ENCODE measurements at regions of chr15 and their contacts with region 1.

Region 1: GRCh38 chr15:90320061-90320884 is 31.8 kb upstream of the ZNF774 start:
- DNase-seq: peak; percentile 39 to 74 (median 65)
- ATAC-seq: peak; percentile 100
- H3K4me3 ChIP-seq: no peak overlapping the region
- H3K4me3 Mint-ChIP-seq: peak overlapping the region in 6 of 10 donors; percentile 8 to 52 (median 38)
- H3K27ac ChIP-seq: no peak overlapping the region
- H3K27ac Mint-ChIP-seq: peak overlapping the region in 2 of 9 donors; percentile 26 to 28
- H3K4me1 ChIP-seq: peaks cover 0 to 5% of the 10 kb centered on the region in 2 donors
- H3K4me1 Mint-ChIP-seq: peaks cover 3 to 10% (median 8%) of the 10 kb centered on the region in 7 donors
- H3K27me3 ChIP-seq: no peaks in the 10 kb centered on the region
- H3K27me3 Mint-ChIP-seq: peaks cover 0 to 2% (median 0%) of the 10 kb centered on the region in 5 donors

Region 2: DNA sequence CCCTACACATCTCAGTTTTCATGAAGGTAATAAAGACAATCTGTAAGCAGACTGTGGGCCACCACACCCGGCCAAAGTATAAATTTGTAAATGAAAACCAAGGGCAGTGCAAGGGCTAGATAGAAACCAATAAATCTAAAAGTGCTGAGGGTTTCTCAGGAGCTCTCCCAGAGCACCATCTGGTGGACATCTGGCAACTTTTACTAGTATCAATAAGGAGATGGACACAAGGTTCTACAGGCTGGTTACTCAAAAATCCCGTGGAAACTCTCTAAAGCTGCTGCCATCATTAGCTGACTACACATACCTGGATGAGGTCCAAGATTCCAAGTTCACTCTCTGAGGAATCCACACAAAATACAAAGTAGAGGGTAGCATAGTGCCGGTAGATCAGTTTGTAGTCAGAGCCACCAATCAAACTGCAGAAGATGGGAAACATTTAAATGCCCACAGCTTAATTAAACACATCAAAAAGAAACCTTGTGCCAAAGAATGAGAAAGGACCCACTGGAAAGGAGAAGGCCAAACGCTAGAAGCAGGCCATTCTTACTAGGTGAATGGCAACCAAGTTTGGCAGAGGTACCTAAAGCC is 432.0 kb before region 1 on chr15:
- CTCF ChIA-PET with region 1: no interaction called
- POLR2A ChIA-PET with region 1: no interaction called
- intact Hi-C with region 1: no loop called
- DNase-seq: no peak
- ATAC-seq: no peak
- H3K4me3 ChIP-seq: no peak overlapping the region
- H3K4me3 Mint-ChIP-seq: no peak overlapping the region
- H3K27ac ChIP-seq: no peak overlapping the region
- H3K27ac Mint-ChIP-seq: no peak overlapping the region
- H3K4me1 ChIP-seq: peaks cover 4 to 14% of the 10 kb centered on the region in 2 donors
- H3K4me1 Mint-ChIP-seq: peaks cover 15 to 34% (median 24%) of the 10 kb centered on the region in 7 donors
- H3K27me3 ChIP-seq: no peaks in the 10 kb centered on the region
- H3K27me3 Mint-ChIP-seq: no peaks in the 10 kb centered on the region

Region 3: GRCh38 chr15:90362936-90363212 is 42.6 kb after region 1 on chr15:
- CTCF ChIA-PET with region 1: interaction called, 28 read pairs
- POLR2A ChIA-PET with region 1: no interaction called
- intact Hi-C with region 1: loop called (anchors 1 to 5 kb)
- DNase-seq: no peak
- ATAC-seq: no peak
- H3K4me3 ChIP-seq: no peak overlapping the region
- H3K4me3 Mint-ChIP-seq: peak overlapping the region in 1 of 10 donors; percentile 44
- H3K27ac ChIP-seq: no peak overlapping the region
- H3K27ac Mint-ChIP-seq: no peak overlapping the region
- H3K4me1 ChIP-seq: peaks cover 6 to 13% of the 10 kb centered on the region in 2 donors
- H3K4me1 Mint-ChIP-seq: peaks cover 11 to 35% (median 34%) of the 10 kb centered on the region in 7 donors
- H3K27me3 ChIP-seq: no peaks in the 10 kb centered on the region
- H3K27me3 Mint-ChIP-seq: no peaks in the 10 kb centered on the region

Region 4: DNA sequence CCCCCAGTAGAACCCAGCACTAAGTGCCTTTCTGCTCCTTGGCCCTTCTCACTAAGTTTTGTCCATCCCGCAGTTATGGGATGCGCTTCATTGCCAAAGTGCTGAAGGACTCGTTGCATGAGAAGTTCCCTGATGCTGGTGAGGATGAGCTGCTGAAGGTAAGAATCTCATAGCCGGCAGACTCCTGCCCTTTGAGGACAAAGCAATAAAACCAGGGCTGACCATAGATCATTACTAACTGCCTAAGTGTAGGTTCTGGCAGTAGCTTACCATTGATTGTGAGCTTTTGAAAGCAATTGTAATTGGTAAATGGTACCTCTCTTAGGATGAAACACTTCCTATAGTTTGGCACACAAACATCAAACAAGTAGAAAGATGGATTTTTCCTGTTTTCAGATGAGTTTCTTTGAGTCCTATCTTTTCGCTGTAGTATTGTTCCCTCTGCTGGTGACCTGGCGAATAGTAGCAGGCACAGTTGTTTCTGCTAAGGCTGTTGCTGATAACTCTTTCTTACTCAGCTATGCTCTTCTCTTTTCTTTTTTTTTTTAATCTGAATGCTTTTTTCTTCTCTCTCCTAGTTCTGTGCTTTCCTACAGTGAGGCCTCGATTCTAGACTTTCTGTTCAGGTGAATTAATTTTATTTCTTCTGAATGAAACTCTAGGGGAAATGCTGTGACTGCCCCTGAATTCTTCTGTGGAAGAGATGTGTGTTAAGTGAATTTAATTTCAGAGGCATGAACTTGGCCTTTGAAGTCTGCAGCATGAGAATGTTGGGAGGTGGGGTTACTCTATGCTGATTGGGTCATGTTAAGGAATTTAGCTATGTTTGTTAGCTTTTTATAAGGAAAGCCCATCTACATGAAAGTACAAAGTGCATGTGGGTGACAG is 162.1 kb after region 1 on chr15:
- CTCF ChIA-PET with region 1: interaction called, 107 read pairs
- POLR2A ChIA-PET with region 1: interaction called, 10 read pairs
- intact Hi-C with region 1: loop called (anchors 1 kb)
- DNase-seq: peak in 7 of 9 donors; percentile 28 to 60 (median 47)
- ATAC-seq: peak; percentile 61
- H3K4me3 ChIP-seq: no peak overlapping the region
- H3K4me3 Mint-ChIP-seq: no peak overlapping the region
- H3K27ac ChIP-seq: no peak overlapping the region
- H3K27ac Mint-ChIP-seq: peak overlapping the region in 4 of 9 donors; percentile 9 to 50 (median 32)
- H3K4me1 ChIP-seq: peaks cover 10 to 11% of the 10 kb centered on the region in 2 donors
- H3K4me1 Mint-ChIP-seq: peaks cover 9 to 44% (median 40%) of the 10 kb centered on the region in 7 donors
- H3K27me3 ChIP-seq: no peaks in the 10 kb centered on the region
- H3K27me3 Mint-ChIP-seq: no peaks in the 10 kb centered on the region

Region 5: GRCh38 chr15:90603893-90604292 is 283.6 kb after region 1 on chr15:
- CTCF ChIA-PET with region 1: interaction called, 3 read pairs
- POLR2A ChIA-PET with region 1: no interaction called
- intact Hi-C with region 1: loop called in 1 of 2 experiments (anchors 5 kb)
- DNase-seq: peak in 4 of 9 donors; percentile 35 to 44 (median 38)
- ATAC-seq: peak; percentile 55
- H3K4me3 ChIP-seq: no peak overlapping the region
- H3K4me3 Mint-ChIP-seq: peak overlapping the region in 2 of 10 donors; percentile 0 to 7
- H3K27ac ChIP-seq: no peak overlapping the region
- H3K27ac Mint-ChIP-seq: peak overlapping the region in 8 of 9 donors; percentile 14 to 83 (median 70)
- H3K4me1 ChIP-seq: peaks cover 0 to 32% of the 10 kb centered on the region in 2 donors
- H3K4me1 Mint-ChIP-seq: peaks cover 37 to 76% (median 58%) of the 10 kb centered on the region in 7 donors
- H3K27me3 ChIP-seq: no peaks in the 10 kb centered on the region
- H3K27me3 Mint-ChIP-seq: no peaks in the 10 kb centered on the region

Region 6: GRCh38 chr15:90620379-90621067 is 300.2 kb after region 1 on chr15:
- CTCF ChIA-PET with region 1: no interaction called
- POLR2A ChIA-PET with region 1: no interaction called
- intact Hi-C with region 1: loop called (anchors 2 to 5 kb)
- DNase-seq: peak in 5 of 9 donors; percentile 28 to 45 (median 39)
- ATAC-seq: peak; percentile 80
- H3K4me3 ChIP-seq: peak overlapping the region; percentile 32
- H3K4me3 Mint-ChIP-seq: peak overlapping the region; percentile 42 to 82 (median 75)
- H3K27ac ChIP-seq: peak overlapping the region; percentile 53
- H3K27ac Mint-ChIP-seq: peak overlapping the region; percentile 85 to 97 (median 90)
- H3K4me1 ChIP-seq: peaks cover 0 to 18% of the 10 kb centered on the region in 2 donors
- H3K4me1 Mint-ChIP-seq: peaks cover 21 to 44% (median 38%) of the 10 kb centered on the region in 7 donors
- H3K27me3 ChIP-seq: no peaks in the 10 kb centered on the region
- H3K27me3 Mint-ChIP-seq: no peaks in the 10 kb centered on the region

Region 7: DNA sequence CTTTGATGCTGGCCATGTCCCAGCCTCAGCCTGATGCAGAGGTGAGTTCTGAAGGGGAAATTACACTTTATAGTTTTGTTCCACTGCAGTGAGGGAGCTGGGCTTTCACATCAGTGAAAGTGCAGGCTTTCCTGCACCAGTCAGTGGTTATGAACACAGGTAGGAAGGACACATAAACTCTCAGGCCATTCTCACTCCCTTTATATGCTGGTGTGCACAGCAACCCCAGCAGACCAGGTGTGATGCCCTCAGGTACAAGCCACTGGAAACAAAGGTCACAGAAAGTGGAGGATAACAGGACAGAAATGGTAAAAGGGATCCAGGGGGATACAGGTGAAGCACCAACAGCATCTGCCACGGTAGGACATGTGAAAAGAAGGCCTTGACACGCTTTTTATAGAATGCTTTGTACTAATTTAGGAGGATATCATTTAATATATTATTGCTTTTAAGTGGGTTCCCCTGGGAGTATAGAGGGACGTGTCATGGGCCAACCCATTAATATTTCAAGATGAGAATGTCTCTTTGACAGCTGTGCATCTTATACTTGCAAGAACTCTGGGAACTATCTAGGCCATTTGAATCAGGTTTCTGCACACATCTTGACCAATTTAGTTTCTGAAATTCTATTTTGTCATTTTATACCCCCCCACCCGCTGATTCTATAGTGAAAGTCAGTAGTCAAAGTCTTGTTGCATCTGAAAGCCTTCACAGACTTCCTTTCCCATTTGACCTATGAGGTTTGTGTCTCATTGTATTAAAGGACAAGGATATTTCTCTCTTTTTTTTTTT is 371.9 kb after region 1 on chr15:
- CTCF ChIA-PET with region 1: no interaction called
- POLR2A ChIA-PET with region 1: no interaction called
- intact Hi-C with region 1: loop called in 1 of 2 experiments (anchors 1 kb)
- DNase-seq: no peak
- ATAC-seq: no peak
- H3K4me3 ChIP-seq: no peak overlapping the region
- H3K4me3 Mint-ChIP-seq: peak overlapping the region in 1 of 10 donors; percentile 33
- H3K27ac ChIP-seq: no peak overlapping the region
- H3K27ac Mint-ChIP-seq: peak overlapping the region in 1 of 9 donors; percentile 40
- H3K4me1 ChIP-seq: no peaks in the 10 kb centered on the region
- H3K4me1 Mint-ChIP-seq: peaks cover 1 to 52% (median 10%) of the 10 kb centered on the region in 7 donors
- H3K27me3 ChIP-seq: no peaks in the 10 kb centered on the region
- H3K27me3 Mint-ChIP-seq: no peaks in the 10 kb centered on the region

Region 8: GRCh38 chr15:91271565-91272153 is 951.4 kb after region 1 on chr15:
- CTCF ChIA-PET with region 1: no interaction called
- POLR2A ChIA-PET with region 1: interaction called, 3 read pairs
- intact Hi-C with region 1: loop called in 1 of 2 experiments (anchors 10 kb)
- DNase-seq: peak in 8 of 9 donors; percentile 34 to 65 (median 52)
- ATAC-seq: peak; percentile 79
- H3K4me3 ChIP-seq: no peak overlapping the region
- H3K4me3 Mint-ChIP-seq: peak overlapping the region in 8 of 10 donors; percentile 34 to 67 (median 53)
- H3K27ac ChIP-seq: no peak overlapping the region
- H3K27ac Mint-ChIP-seq: no peak overlapping the region
- H3K4me1 ChIP-seq: no peaks in the 10 kb centered on the region
- H3K4me1 Mint-ChIP-seq: peaks cover 0 to 11% (median 5%) of the 10 kb centered on the region in 7 donors
- H3K27me3 ChIP-seq: no peaks in the 10 kb centered on the region
- H3K27me3 Mint-ChIP-seq: peaks cover 12 to 40% (median 17%) of the 10 kb centered on the region in 5 donors